Activated T-helper 1 cell treated with anti-CD3 and anti-CD28 coated beads, Interleukin-12 subunit alpha, Interleukin-12 subunit beta, Interleukin-2, Interleukin-4 antibody, amounts not matched to agents 30 ng/mL and 10 ng/mL and 1 ng/mL, durations not matched to agents 14 hours and 24 hours and 36 hours (primary cell): ENCODE measurements at regions of chr22 and their contacts with region 1.

Region 1: DNA sequence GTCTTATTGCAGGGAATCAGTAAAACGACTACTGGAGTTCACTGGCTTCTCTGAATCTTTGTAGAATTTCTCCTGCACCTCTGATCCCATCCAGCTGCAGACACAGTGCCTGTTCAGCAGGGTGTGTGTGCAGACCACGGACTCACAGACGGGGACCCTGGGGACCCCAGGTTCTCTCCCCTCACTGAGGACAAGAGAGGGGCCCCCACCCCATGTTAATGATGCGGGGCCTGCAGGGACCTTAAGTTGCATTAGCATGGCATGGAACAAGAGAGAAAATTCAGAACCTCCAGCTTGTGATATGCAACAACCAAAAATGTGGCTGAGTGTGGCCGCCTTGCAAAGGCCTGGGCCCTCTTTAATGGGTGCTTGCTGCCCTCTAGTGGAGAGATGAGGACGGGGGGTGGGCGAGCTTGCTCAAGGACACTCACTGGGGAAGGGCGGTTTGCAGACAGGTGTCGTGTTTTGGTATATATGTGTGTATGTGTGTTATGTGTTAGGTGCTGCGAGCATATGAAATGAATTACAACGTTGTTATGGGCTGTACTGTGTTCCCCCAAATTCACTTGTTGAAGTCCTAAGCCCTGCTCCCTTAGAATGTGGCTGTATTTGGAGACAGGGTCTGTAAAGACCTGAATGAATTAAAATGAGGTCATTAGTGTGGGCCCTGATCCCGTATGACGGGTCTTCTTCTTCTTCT is 84.4 kb upstream of the SEPTIN5 start:
- DNase-seq: peak; percentile 77
- H3K4me3 Mint-ChIP-seq: no peak overlapping the region
- H3K27ac Mint-ChIP-seq: no peak overlapping the region
- H3K4me1 Mint-ChIP-seq: peaks cover 5% of the 10 kb centered on the region
- H3K27me3 Mint-ChIP-seq: peaks cover 8% of the 10 kb centered on the region

Region 2: DNA sequence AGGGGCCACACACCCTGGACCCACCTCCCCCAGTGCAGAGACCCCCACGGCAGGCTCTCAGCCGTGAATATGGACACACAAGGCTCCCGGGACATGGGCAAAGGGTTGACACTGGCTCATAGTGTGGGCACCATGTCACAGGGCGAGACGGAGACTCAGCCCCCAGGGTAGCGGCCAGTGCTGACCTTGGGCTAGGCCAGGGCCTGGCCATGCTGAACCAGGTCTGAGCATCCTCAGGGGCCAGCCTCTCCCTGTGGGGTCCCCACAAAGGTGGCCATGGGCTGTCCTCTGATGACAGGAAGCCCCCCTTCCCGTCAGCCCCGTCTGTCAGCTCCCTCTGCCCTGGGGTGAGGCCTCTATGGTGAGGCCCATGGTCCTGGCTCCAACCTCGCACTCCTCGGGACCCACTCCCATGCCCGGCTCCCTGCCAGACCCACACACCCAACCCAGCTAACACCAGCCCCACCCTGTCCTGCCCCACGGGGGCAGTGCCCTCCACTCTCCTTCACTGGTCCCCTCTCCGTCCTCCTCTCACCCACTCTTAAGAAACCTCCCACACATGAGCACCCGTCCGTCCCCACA is 674.8 kb before region 1 on chr22:
- intact Hi-C with region 1: loop called (anchors 1 kb)
- DNase-seq: no peak
- H3K4me3 Mint-ChIP-seq: no peak overlapping the region
- H3K27ac Mint-ChIP-seq: no peak overlapping the region
- H3K4me1 Mint-ChIP-seq: no peaks in the 10 kb centered on the region
- H3K27me3 Mint-ChIP-seq: no peaks in the 10 kb centered on the region

Region 3: DNA sequence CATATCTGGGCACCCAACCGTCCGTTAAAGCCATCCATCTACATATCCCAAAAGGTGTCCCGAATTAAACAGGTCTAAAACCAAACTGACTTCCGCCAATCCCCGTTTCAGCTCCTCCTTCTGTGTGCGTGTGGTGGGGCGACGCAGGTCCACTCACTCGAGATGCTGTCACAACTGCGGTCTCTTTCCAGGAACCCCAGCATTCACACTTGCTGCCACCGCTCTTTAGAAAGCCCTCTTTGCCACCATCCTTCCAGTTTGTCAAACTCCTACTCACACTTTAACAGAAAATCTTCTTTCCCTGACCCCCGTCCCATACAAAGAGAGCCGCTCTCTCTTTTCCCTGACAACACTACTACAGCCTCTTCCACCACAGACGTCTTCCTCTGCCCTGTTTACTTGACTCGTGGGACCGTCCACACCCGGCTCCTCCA is 485.9 kb before region 1 on chr22:
- intact Hi-C with region 1: loop called (anchors 1 kb)
- DNase-seq: peak; percentile 40
- H3K4me3 Mint-ChIP-seq: peak overlapping the region; percentile 98
- H3K27ac Mint-ChIP-seq: peak overlapping the region; percentile 97
- H3K4me1 Mint-ChIP-seq: peaks cover 23% of the 10 kb centered on the region
- H3K27me3 Mint-ChIP-seq: peaks cover 22% of the 10 kb centered on the region

Region 4: DNA sequence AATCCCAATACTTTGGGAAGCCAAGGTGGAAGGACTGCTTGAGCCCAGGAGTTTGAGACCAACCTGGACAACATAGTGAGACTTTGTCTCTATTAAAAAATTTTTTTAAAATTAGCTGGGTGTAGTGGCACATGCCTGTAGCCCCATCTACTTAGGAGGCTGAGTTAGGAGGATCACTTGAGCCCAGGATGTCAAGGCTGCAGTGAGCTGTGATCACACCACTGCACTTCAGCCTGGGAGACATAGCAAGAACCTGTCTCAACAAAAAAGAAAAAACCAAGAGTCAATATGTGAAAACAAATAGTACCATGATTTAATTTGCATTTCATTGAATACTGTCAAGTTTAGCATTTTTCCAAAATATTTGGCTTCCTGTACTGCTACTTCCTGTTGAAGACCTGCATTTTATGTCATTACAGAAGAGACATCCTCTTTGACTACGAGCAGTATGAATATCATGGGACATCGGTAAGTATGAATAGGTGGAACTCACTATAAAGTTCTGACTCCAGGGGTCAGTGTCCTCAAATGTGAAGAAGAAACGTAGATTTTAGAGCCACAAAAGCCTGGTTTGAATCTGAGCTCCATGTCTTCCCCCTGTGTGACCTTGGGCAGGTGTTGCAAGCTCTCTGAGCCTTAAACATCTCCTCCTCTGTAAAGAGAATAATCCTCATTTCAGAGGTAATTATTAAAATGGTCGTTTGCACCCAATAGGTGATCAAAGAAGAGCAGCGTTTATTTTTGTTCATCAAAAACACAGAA is 134.1 kb before region 1 on chr22:
- intact Hi-C with region 1: loop called (anchors 1 kb)
- DNase-seq: no peak
- H3K4me3 Mint-ChIP-seq: no peak overlapping the region
- H3K27ac Mint-ChIP-seq: no peak overlapping the region
- H3K4me1 Mint-ChIP-seq: peaks cover 8% of the 10 kb centered on the region
- H3K27me3 Mint-ChIP-seq: no peaks in the 10 kb centered on the region

Region 5: DNA sequence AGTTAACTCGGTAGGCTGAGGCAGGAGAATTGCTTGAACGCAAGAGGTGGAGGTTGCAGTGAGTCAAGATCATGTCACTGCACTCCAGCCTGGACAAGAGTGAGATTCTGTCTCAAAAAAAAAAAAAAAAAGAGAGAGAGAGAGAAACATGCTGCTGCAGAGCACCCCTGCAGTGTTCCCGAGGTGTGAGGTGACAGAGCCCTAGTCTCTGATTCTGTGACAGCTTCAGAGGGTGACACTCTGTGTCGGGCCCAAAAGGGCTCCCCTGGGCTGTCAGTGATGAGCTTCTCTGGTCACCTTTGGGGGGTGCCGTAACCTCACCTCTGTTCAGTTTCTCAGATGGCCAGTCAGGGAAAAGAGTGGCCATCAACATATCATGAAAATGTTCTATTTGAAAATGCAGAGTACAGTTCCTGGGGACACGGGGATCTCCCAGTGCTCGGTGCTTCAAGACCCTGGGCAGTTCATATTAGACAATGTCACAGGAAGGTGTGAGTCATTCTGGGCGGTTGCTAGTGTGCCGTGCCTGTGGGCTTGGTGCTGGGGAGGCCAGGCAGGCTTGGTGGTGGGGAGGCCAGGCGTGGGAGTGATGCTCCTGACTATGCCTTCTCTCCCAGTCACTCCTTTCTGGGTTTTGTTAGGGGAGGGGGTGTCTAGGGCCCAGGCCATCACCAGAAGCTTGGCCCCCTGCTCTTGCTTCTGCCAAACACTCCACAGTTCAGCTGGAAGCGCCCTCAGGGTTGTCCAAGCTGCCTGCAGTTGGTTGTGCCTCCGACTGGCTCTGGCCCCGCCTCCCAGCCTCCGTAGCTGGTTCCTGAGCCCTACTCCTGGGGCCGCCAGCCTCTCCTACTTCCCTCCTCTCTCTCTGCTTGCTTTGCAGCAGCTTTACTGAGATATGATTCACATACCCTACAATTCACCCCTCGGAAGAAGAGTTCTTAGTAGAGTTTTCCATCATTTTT is 53.1 kb before region 1 on chr22:
- intact Hi-C with region 1: loop called (anchors 2 kb)
- DNase-seq: peak; percentile 60
- H3K4me3 Mint-ChIP-seq: peak overlapping the region; percentile 27
- H3K27ac Mint-ChIP-seq: peak overlapping the region; percentile 80
- H3K4me1 Mint-ChIP-seq: peaks cover 44% of the 10 kb centered on the region
- H3K27me3 Mint-ChIP-seq: no peaks in the 10 kb centered on the region